Prostate gland (tissue), 2 donors: ENCODE measurements at regions of chr18 and their contacts with region 1.

Region 1: GRCh38 chr18:3245853-3246634 is 1.6 kb upstream of the MYL12A start:
- DNase-seq: peak; percentile 88
- H3K4me3 ChIP-seq: peak overlapping the region; percentile 91 to 96
- H3K27ac ChIP-seq: peak overlapping the region; percentile 99
- H3K4me1 ChIP-seq: no peaks in the 10 kb centered on the region
- H3K27me3 ChIP-seq: no peaks in the 10 kb centered on the region
- CTCF ChIP-seq: peak; percentile 52 to 97 (median 90)
- POLR2A ChIP-seq: no peak

Region 2: DNA sequence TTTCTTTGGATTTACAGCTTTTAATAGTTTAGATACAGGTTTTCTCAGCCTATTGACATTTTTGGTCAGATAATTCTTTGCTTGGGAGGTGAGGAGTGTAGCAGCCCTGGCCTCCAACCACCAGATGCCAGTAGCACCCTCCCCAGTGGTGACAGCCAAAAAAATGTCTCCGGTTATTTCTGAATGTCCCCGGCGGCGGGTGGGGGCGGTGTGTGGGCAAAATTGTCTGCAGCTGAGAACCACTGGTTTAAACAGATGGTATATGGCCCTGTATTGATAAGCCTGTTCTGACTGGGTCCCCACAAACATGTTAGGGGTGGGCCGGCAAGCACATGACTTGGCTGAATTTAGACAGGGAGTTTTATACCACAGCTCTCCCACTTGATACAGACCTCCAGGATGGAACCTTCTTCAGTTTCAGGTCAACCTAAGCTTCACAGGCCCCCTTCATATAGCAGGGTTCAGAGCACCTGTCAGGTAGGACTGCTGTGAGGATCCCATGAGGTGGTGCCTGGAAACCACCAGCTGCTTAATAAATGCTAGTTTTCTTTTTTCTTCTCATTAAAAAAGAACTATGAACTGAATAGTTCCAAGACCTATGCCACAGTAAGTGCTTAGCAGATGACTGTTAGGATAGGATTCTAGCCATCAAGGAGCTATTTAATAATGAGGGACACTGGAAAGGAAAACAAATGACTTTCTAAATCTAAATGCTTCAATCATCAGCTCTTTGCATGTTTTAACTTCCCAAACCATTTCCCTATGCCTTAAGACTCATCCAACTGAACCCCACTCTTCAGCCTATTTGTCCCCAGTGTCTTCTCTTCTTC is 251.2 kb before region 1 on chr18:
- intact Hi-C with region 1: loop called (anchors 5 kb)
- DNase-seq: no peak
- H3K4me3 ChIP-seq: no peak overlapping the region
- H3K27ac ChIP-seq: no peak overlapping the region
- H3K4me1 ChIP-seq: peaks cover 8% of the 10 kb centered on the region
- H3K27me3 ChIP-seq: no peaks in the 10 kb centered on the region
- CTCF ChIP-seq: peak in 2 of 4 experiments; percentile 16 to 36
- POLR2A ChIP-seq: no peak

Region 3: DNA sequence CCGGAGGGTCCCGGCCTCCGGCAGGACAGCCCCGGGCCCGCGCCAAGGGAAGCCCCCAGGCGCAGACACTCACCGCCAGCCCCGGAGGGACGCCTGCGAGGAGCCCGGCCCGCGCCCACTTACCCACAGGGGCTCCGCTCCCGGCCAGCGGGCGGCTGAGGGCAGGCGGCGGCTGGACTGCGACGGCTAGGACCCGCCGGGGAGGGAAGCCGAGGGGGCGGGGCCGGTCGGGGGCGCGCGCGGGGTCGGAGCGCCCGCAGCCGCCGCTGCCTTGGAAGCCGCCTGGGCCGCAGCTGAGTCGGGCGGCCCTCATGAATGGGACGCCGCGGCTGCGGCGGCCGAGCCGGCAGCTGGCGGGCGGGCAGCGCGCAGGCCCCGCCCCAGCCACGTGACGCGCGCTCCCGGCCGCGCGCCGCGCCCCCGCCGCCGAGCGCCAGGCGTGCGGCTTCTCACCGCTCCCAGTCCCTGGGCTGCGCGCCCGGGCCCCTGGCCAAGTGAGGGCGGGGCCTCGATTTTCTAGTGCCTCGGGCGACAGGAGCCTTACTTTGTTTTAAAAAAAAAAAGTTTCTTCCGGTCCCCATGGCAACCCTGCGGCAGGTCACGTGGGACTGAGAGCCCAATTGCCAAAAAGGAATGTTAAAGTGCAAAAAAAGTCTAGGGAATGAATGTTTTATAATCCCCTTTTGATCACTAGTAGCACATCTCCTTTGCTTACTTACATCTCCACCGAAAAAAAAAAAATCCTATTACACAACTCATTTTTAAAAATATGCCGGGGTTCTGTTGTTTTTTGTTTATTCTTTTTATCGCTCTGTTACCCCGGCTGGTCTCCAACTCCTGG is 232.9 kb before region 1 on chr18 and contains the start of gene LPIN2:
- intact Hi-C with region 1: loop called (anchors 2 kb)
- DNase-seq: peak; percentile 95
- H3K4me3 ChIP-seq: peak within 1 kb of the TSS; percentile 91 to 92
- H3K27ac ChIP-seq: peak within 1 kb of the TSS; percentile 87 to 95
- H3K4me1 ChIP-seq: no peaks in the 10 kb centered on the region
- H3K27me3 ChIP-seq: no peaks in the 10 kb centered on the region
- CTCF ChIP-seq: no peak
- POLR2A ChIP-seq: peak; percentile 44
- total RNA-seq, gene LPIN2: 19.5 to 120 TPM

Region 4: GRCh38 chr18:3151399-3152264 is 94.4 kb before region 1 on chr18:
- intact Hi-C with region 1: loop called (anchors 5 kb)
- DNase-seq: no peak
- H3K4me3 ChIP-seq: no peak overlapping the region
- H3K27ac ChIP-seq: no peak overlapping the region
- H3K4me1 ChIP-seq: no peaks in the 10 kb centered on the region
- H3K27me3 ChIP-seq: no peaks in the 10 kb centered on the region
- CTCF ChIP-seq: peak in 3 of 4 experiments; percentile 53 to 65 (median 63)
- POLR2A ChIP-seq: no peak

Region 5: DNA sequence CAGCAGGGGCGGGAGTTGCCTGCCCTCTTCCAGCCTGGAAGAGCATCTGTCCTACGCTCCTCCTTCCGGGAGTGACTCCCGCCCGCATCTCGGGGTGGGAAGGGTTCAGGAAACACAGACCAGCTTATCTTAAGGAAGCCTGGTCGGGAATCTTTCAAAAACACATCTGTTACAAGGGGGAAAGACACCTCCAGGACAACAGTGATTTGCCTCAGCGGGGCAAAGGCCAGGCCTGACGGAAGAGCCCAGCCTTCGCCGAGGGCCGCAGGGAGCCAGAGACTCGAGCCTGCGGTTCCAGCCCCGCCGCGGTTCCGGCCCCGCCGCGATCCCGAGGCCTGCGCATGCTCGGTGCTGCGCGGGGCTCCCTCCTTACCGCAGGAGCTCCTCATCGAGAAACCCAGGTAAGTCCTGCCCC is 165.8 kb after region 1 on chr18:
- intact Hi-C with region 1: no loop called
- DNase-seq: no peak
- H3K4me3 ChIP-seq: peak overlapping the region; percentile 7 to 11
- H3K27ac ChIP-seq: no peak overlapping the region
- H3K4me1 ChIP-seq: no peaks in the 10 kb centered on the region
- H3K27me3 ChIP-seq: no peaks in the 10 kb centered on the region
- CTCF ChIP-seq: no peak
- POLR2A ChIP-seq: no peak